ENCODE measurements at regions of chr2 and their contacts with region 1.

Region 1: DNA sequence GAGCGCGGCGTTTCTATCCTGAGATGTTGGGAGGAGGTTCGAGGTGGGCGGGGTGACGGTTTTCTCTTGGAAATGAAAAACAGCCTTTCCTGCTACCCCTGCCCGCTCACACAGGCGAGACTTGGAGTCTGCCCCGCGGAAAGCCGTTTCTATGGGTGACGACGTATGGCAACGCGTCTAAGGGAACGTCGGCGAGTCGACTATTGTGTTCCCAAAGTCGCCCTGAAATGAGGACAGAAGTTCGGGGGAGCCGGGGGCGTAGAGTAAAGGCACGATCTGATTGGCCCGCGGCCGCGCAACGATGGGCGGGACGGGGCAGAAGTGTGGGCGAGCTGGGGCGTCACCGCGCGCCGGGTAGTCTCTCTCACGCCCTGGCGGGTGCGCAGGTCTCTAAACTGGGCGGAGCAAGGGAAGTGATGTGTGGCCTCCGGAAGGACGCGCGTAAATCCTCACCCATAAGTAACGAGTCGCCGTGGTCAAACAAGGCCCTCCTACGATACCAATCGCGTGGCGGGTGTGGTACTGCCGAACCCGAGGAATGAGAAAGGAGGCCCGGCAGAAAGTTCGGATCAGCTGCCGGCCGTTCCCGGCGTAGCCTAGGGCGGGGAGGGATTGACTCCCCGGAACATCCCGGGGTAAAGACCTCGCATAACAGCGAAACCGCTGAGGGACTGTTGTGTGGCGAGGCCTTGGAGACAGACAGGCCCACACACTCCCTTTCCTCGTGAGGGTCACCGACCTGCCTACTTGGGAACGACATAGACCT is 89.6 kb downstream of the FAM161A start:
- DNase-seq: peak; percentile 94 to 100 (median 98)

Region 2: GRCh38 chr2:61470965-61471904 is 293.0 kb before region 1 on chr2 and contains the start of gene USP34:
- intact Hi-C with region 1: loop called (anchors 10 kb)
- DNase-seq: peak; percentile 84 to 98 (median 92)

Region 3: GRCh38 chr2:61538200-61538919 is 225.9 kb before region 1 on chr2 and contains the start of gene XPO1:
- intact Hi-C with region 1: loop called (anchors 2 kb)
- DNase-seq: peak; percentile 99 to 100 (median 100)

Region 4: DNA sequence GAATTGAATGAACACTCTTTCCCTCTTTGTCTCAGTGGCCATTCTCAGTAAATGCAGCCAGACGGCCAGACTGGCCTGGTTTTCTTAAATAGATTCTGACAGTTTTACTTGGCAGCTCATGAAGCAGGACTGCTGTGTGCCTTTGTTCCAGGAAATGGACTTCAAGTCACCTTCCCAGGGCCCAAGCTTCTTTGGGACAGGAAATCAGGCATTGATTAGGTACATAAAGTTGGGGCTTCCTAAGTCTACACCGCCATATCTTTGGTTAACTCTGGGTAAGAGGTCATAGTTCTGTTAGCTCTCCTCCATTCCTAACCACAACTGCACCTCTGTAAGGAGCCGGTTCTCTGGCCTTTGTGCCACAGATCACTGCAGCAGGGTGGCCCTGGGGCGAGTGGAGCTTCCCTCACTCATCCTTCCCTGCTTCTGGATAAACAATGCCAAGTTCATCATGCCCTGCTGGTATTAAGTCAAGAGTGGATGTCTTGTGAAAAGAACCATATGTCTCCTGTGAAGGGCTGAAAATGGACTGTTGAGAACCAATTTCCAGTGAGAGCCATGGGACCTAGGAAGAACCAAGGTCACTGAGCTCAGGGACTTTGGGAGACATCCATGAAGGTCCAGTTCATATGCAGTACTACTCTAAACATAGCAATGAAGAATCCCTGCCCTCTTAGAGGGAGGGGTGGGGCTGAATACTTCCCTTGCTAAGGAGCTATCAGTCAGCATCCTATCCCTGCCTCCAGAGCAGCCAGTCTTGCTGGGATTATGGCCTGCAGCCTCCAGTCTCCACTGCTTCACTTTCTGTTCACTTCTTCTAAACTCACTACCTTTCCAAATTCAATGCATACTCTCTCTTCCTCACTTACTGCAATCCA is 103.5 kb before region 1 on chr2:
- intact Hi-C with region 1: loop called (anchors 10 kb)
- DNase-seq: peak in 4 of 10 donors; percentile 8 to 82 (median 13)

Region 5: GRCh38 chr2:61694312-61695274 is 69.6 kb before region 1 on chr2:
- intact Hi-C with region 1: loop called (anchors 10 kb)
- DNase-seq: peak; percentile 86 to 99 (median 92)

Region 6: DNA sequence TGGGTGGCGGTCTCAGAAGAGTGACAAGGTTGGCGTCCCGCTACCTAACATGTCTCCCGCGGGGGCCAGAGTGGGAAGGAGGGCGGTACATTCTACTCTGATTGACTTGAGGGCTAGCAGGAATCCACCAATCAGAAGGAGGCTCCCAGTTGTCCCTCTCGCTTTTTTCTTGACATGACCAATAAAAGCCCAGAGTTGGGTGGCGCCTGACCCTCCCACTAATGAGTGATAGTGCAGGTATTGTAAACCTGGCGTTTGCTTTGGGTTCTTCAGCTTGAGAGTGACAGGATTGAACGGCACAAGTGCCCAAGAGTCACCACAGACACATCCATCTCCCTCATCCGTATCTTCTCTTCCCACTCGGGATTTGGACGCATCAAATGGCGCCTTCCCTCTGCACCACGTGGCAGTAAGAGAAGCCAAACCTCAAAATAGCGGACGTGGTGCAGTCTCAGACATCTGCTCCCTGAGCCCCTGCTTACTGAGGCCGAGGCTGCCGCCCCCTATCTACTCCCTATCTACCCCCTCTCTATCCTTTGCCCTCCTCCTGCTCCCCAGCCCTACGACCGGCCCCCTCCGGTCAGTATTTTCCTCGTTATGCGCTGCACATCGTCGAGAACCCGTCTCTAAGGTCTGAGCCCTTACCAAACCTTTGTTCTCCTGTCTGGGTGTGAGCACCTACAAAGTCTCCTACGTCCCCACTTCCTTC is 90.4 kb after region 1 on chr2:
- intact Hi-C with region 1: loop called (anchors 10 kb)
- DNase-seq: peak; percentile 80 to 98 (median 89)

Region 7: GRCh38 chr2:61888267-61889055 is 124.2 kb after region 1 on chr2 and contains the start of gene CCT4:
- intact Hi-C with region 1: no loop called
- DNase-seq: peak; percentile 81 to 98 (median 88)

Region 8: GRCh38 chr2:61949714-61950560 is 185.7 kb after region 1 on chr2:
- intact Hi-C with region 1: no loop called
- DNase-seq: no peak

Measured in posterior cingulate gyrus (tissue), 11 donors.